ENCODE measurements at regions of chr14 and their contacts with region 1.

Region 1: GRCh38 chr14:103920981-103921854 is 7.0 kb upstream of the TDRD9 start:
- DNase-seq: peak; percentile 97
- H3K4me3 Mint-ChIP-seq: peak overlapping the region; percentile 89
- H3K27ac Mint-ChIP-seq: peak overlapping the region; percentile 71
- H3K4me1 Mint-ChIP-seq: no peaks in the 10 kb centered on the region
- H3K27me3 Mint-ChIP-seq: no peaks in the 10 kb centered on the region
- CTCF ChIP-seq: peak; percentile 90

Region 2: DNA sequence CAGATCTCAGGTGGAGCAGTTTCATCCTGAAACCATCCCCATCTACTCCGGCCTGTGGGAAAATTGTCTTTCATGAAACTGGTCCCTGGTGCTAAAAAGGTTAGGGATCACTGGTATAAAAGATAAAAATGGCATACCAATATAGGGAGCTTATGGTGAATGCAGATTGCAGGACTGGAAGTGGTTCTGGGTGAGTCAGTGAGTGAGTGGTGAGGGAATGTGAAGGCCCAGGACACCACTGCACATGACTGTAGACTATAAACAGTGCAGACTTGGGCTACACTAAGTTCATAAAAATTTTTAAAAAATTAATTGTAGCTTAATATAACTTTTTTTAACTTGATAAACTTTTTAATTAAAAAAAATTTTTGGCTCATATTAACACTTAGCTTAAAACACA is 88.1 kb after region 1 on chr14:
- CTCF ChIA-PET with region 1: no interaction called
- intact Hi-C with region 1: loop called (anchors 5 kb)
- DNase-seq: no peak
- H3K4me3 Mint-ChIP-seq: no peak overlapping the region
- H3K27ac Mint-ChIP-seq: no peak overlapping the region
- H3K4me1 Mint-ChIP-seq: peaks cover 10% of the 10 kb centered on the region
- H3K27me3 Mint-ChIP-seq: no peaks in the 10 kb centered on the region
- CTCF ChIP-seq: no peak

Measured in Calu3 (cell line).